ENCODE measurements at regions of chr1 and their contacts with region 1.

Region 1: DNA sequence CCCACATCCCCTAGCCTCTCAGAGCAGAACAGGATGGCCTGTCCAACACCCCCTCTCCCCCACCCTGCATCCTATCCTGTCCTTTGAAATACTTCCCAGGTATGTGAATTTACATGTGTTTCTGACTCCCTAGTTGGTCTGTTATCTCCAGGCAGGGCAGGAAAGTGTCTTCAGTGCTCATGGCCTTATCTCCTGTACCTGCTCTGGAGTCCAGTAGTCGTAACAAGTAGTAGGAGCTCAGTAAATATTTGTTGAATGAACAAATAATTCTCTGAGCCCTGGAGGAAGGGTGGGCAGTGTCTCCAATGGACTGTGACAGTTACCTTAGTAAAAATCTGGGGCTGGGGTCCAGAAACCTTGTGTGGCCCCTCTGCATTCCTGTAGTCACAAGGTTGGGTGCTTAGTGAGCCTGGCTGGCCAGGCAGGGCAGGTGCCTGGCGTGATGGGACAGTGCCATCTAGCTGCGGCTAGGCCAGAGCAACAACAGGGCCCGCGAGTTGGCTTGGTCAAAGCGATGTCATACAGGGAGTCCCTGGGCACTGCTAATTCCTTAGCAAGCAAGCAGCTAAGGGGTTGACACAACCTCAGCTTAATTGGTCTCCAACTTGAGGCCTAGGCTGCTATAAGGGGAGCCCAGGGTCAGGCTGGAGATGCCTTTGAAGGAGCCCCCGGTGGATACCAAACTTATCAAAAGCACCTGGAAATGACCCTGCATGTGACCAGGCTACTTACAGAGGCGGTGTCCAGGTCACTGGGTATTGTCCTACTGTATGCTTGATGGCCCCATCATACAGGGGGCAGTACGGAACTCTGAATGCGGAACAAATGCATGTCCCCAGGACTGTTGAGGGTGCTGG is 89.0 kb upstream of the PPM1J start:
- DNase-seq: peak; percentile 73
- H3K4me3 Mint-ChIP-seq: no peak overlapping the region
- H3K27ac Mint-ChIP-seq: no peak overlapping the region
- H3K4me1 Mint-ChIP-seq: no peaks in the 10 kb centered on the region
- H3K27me3 Mint-ChIP-seq: peaks cover 31% of the 10 kb centered on the region

Region 2: GRCh38 chr1:112715264-112716053 is 88.7 kb before region 1 on chr1 and contains the start of gene PPM1J:
- CTCF ChIA-PET with region 1: interaction called, 224 read pairs
- DNase-seq: peak; percentile 99
- H3K4me3 Mint-ChIP-seq: peak within 1 kb of the TSS; percentile 79
- H3K27ac Mint-ChIP-seq: no peak within 1 kb of the TSS
- H3K4me1 Mint-ChIP-seq: peaks cover 23% of the 10 kb centered on the region
- H3K27me3 Mint-ChIP-seq: peaks cover 86% of the 10 kb centered on the region

Measured in activated naive CD4-positive, alpha-beta T cell treated with anti-CD3 and anti-CD28 coated beads, Interleukin-2, amount 10 ng/mL, durations not matched to agents 7 days and 5 days (primary cell).